ENCODE measurements at regions of chr5 and their contacts with region 1.

Region 1: GRCh38 chr5:73135429-73136054 is 15.2 kb downstream of the TMEM171 start:
- DNase-seq: peak; percentile 31
- ATAC-seq: peak; percentile 77
- H3K4me3 Mint-ChIP-seq: no peak overlapping the region
- H3K27ac Mint-ChIP-seq: no peak overlapping the region
- H3K4me1 Mint-ChIP-seq: peaks cover 27% of the 10 kb centered on the region
- H3K27me3 Mint-ChIP-seq: no peaks in the 10 kb centered on the region
- CTCF ChIP-seq: peak; percentile 39; the same call in 1 of the 2 replicates

Region 2: DNA sequence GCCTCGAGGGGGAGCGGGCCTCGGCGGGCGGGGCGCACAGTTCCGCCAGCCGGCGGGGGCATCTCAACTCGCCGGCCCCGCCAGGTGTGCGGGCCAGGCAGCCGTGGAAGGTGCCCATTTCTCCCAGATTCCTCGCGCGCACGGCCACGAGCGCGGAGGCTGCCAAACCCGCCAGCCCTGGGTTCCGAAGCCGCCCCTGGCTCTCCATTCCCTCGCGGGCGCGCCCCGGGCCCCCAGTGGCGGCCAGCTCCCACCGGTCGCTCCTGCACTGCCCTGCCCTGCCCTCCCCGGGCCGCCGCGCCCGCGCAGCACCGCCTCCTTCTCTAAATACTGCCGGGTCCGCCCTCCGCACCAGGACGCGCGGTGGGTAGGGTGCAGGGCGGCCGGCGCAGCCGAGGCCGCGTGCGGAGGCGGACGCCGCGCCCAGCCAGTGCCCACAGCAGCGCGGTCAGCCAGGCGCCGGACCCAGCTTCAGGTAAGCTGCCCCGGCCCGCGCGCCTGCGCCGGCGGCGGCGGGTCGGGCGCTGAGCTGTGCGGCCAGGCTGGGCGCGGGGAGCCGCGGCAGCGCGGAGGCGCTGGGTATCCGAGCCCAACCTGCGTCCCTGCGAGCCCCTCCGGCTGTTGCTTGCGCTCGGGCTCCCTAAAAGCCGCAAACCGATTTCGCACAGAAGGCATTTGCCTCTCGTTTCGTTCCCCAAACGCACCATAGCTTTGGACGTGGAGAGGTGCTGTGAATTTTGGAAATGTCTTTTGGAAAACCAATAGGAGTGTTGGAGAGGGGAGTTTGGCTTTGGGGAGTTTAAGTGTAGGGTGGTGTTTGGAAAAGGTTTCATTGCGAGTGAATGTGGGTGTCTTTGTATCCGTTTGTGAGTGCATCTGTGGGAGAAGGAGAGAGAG is 15.1 kb before region 1 on chr5 and contains the start of gene TMEM171:
- CTCF ChIA-PET with region 1: interaction called, 10 read pairs
- POLR2A ChIA-PET with region 1: no interaction called
- DNase-seq: peak; percentile 73
- ATAC-seq: peak; percentile 81
- H3K4me3 Mint-ChIP-seq: peak within 1 kb of the TSS; percentile 79
- H3K27ac Mint-ChIP-seq: no peak within 1 kb of the TSS
- H3K4me1 Mint-ChIP-seq: peaks cover 31% of the 10 kb centered on the region
- H3K27me3 Mint-ChIP-seq: peaks cover 68% of the 10 kb centered on the region
- CTCF ChIP-seq: no peak
- total RNA-seq, gene TMEM171: 0.96 to 1.8 TPM (median 1.7 TPM) in 3 replicates

Region 3: DNA sequence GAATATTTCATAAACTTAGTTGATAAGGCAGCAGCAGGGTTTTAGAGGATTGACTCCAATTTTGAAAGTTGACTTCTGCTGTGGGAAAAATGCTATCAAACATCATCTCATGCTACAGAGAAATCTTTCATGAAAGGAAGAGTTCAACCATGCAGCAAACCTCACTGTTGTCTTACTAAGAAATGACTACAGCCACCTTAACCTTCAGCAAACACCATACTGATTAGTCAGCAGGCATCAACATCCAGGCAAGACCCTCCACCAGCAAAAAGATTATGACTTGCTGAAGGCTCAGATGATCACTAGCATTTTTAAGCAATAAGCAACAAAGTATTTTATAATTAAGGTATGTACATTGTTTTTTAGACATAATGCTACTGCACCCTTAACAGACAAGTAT is 45.0 kb after region 1 on chr5:
- CTCF ChIA-PET with region 1: no interaction called
- POLR2A ChIA-PET with region 1: no interaction called
- DNase-seq: no peak
- ATAC-seq: no peak
- H3K4me3 Mint-ChIP-seq: no peak overlapping the region
- H3K27ac Mint-ChIP-seq: no peak overlapping the region
- H3K4me1 Mint-ChIP-seq: peaks cover 8% of the 10 kb centered on the region
- H3K27me3 Mint-ChIP-seq: peaks cover 5% of the 10 kb centered on the region; the same call in 1 of the 2 replicates
- CTCF ChIP-seq: no peak

Region 4: GRCh38 chr5:73365301-73365853 is 229.8 kb after region 1 on chr5:
- CTCF ChIA-PET with region 1: no interaction called
- POLR2A ChIA-PET with region 1: no interaction called
- DNase-seq: no peak
- ATAC-seq: no peak
- H3K4me3 Mint-ChIP-seq: no peak overlapping the region
- H3K27ac Mint-ChIP-seq: no peak overlapping the region
- H3K4me1 Mint-ChIP-seq: peaks cover 6% of the 10 kb centered on the region
- H3K27me3 Mint-ChIP-seq: peaks cover 14% of the 10 kb centered on the region
- CTCF ChIP-seq: no peak